ENCODE measurements at regions of chr1 and their contacts with region 1.

Region 1: DNA sequence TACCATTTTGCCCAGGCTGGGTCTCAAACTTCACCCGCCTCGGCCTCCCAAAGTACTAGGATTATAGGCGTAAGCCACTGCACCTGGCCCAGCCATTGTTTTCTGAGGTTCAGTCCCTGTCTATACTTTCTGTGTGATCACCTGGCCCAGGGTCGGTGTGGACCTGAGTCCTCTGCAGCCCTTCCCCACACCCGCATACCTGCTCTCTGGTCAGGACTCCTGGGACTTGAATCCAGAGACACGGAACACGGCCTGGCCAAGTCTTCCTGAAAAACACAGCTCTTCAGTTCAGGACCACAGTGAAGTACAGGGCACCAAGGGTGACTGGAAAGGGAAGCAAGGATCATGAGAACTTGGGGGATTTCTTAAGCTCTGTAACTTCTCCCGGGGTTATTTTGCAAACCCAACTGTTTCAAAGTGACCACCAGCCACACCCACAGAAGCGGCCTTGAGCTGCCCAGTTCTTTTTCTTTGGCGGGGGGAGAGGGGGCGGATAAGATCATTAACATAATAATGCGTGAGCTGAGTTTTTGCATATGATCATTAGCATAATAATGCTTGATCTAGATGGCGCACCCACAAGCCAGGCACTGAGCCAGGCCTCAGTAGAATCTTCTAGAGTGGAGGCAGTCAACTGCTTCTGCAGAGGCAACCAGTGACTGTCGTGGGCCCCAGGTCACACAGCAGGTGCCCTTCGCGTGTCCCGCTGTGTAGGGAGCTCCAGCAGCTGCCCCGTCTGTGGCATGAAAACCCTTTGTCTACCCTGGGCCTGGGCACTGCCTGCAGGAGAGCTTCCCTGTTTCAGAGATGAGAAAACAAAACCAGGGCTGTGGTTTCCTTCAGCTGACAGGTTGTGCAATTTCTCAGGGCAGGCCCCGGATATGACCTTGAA is 1.7 kb upstream of the NADK start:
- DNase-seq: peak in 1 of 2 donors; percentile 80
- H3K4me3 ChIP-seq: no peak overlapping the region
- CTCF ChIP-seq: no peak
- POLR2A ChIP-seq: no peak

Region 2: DNA sequence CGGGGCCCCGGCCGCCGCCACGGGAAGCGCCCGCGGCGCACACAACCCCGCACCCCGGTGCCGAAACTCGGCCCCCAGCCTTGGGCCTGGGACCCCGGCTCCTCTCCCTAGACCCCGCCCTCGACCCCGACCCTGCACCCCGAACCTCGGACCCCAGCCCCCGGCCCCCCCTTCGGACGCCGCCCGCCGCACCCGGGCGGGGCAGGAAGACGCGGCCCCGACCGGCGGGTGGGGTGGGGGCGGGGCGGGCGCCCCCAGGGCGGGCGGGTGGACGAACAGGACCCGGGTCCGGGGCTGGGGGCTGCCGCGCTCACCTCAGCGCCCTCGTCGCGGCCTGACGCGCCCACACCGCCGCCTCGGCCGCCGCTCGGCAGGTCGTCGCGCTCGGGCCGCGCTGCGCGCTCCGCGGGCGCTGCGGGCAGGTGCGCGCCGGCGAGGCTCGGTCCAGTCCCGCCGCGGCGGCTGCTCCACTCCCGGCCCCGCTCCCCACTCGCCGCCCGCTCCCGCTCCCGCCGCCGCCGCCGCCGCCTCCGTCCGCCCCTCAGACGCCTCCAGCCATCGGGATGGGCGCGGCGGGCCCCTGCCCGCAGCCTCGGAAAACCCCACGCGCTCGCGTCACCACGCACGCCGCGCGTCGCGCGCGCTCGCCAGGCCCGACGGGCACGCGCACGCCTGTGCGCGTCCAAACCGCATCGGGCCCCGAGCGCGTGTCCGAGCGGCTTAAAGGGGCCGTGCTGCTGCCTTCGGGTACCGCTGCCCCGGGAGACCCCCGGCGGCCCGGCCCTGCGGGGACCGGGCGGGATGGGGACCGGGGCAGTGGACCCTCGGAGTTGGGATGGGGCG is 110.8 kb after region 1 on chr1 and contains the start of gene GNB1:
- intact Hi-C with region 1: loop called (anchors 10 kb)
- DNase-seq: peak; percentile 78 to 96
- H3K4me3 ChIP-seq: peak within 1 kb of the TSS; percentile 72
- CTCF ChIP-seq: no peak
- POLR2A ChIP-seq: peak in 1 of 2 donors; percentile 19
- total RNA-seq, gene GNB1: 103 to 141 (median 123) TPM